ENCODE measurements at regions of chr7 and their contacts with region 1.

Region 1: GRCh38 chr7:3282457-3282856 is 18.6 kb upstream of the SDK1 start:
- DNase-seq: peak; percentile 79 to 89
- H3K4me3 ChIP-seq: no peak overlapping the region
- H3K27ac ChIP-seq: peak overlapping the region; percentile 70 to 74
- H3K4me1 ChIP-seq: peaks cover 0 to 25% (median 7%) of the 10 kb centered on the region in 4 donors
- H3K27me3 ChIP-seq: no peaks in the 10 kb centered on the region
- CTCF ChIP-seq: peak in 1 of 2 experiments; percentile 25

Region 2: DNA sequence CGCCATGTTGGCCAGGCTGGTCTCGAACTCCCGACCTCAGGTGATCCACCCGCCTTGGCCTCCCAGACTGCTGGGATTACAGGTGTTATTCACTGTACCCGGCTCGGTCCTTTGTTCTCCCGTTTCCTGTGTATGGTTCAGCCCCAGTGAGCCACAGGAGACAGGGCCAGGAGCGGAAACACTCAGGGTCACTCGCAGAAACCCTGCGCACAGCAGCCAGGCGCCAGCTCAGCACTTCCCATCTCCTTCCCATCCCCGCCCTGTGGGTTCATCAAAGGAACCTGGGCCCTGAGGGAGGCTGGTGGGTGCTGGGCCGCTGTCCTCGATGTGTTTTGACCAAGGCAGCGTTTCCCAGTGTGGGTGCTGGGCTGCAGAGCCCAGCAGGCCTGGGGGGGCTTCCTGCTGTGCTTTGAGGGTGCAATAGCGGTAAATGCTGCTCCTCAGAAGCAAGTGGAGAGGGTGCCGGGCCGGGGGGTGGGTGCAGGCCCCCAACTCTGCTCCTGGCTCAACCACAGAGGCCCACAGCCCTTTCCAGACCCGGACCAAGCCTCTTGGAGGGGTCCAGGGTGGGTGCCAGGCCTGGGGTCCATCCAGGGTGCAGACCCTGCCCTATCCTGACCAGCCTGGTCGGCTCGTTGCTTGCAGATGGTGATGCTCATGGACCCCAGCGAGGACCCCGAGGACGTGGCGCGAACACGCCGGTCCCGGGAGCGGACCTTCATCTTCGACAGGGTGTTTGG is 894.4 kb before region 1 on chr7:
- intact Hi-C with region 1: no loop called
- DNase-seq: no peak
- H3K4me3 ChIP-seq: no peak overlapping the region
- H3K27ac ChIP-seq: no peak overlapping the region
- H3K4me1 ChIP-seq: no peaks in the 10 kb centered on the region
- H3K27me3 ChIP-seq: no peaks in the 10 kb centered on the region
- CTCF ChIP-seq: no peak

Region 3: DNA sequence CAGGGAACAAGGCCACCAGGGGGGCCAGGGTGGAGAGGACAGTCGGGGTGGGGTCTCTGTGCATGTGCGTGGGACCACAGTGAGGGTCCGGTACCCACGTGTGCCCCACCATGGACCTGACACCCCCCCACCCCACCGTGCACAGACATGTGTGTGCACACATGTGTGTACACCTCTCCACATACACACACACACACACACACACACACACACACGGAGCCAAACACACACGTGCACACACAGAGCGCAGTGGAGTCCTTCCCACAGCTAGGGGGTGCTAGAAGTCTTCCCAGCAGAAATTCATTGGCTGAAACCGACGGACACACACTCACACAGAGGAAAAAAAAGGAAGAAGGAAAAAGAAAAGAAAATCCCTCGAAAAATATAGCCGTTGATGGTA is 395.6 kb before region 1 on chr7:
- intact Hi-C with region 1: loop called (anchors 10 kb)
- DNase-seq: peak in 1 of 2 donors; percentile 38
- H3K4me3 ChIP-seq: peak overlapping the region in 1 of 2 donors; percentile 19
- H3K27ac ChIP-seq: no peak overlapping the region
- H3K4me1 ChIP-seq: peaks cover 0 to 11% (median 2%) of the 10 kb centered on the region in 4 donors
- H3K27me3 ChIP-seq: peaks cover 0 to 37% of the 10 kb centered on the region in 2 donors
- CTCF ChIP-seq: peak; percentile 65 to 67

Region 4: GRCh38 chr7:3082831-3083230 is 199.6 kb before region 1 on chr7:
- intact Hi-C with region 1: no loop called
- DNase-seq: no peak
- H3K4me3 ChIP-seq: no peak overlapping the region
- H3K27ac ChIP-seq: peak overlapping the region in 1 of 2 donors; percentile 27
- H3K4me1 ChIP-seq: peaks cover 0 to 27% (median 9%) of the 10 kb centered on the region in 4 donors
- H3K27me3 ChIP-seq: no peaks in the 10 kb centered on the region
- CTCF ChIP-seq: no peak

Region 5: GRCh38 chr7:3146571-3147226 is 135.8 kb before region 1 on chr7:
- intact Hi-C with region 1: no loop called
- DNase-seq: peak; percentile 39 to 47
- H3K4me3 ChIP-seq: no peak overlapping the region
- H3K27ac ChIP-seq: no peak overlapping the region
- H3K4me1 ChIP-seq: peaks cover 0 to 12% (median 4%) of the 10 kb centered on the region in 4 donors
- H3K27me3 ChIP-seq: peaks cover 0 to 3% of the 10 kb centered on the region in 2 donors
- CTCF ChIP-seq: no peak

Region 6: GRCh38 chr7:3321206-3321605 is 38.7 kb after region 1 on chr7:
- intact Hi-C with region 1: no loop called
- DNase-seq: no peak
- H3K4me3 ChIP-seq: no peak overlapping the region
- H3K27ac ChIP-seq: no peak overlapping the region
- H3K4me1 ChIP-seq: peaks cover 0 to 24% (median 0%) of the 10 kb centered on the region in 4 donors
- H3K27me3 ChIP-seq: no peaks in the 10 kb centered on the region
- CTCF ChIP-seq: no peak